PC-3 (cell line): ENCODE measurements at regions of chr2 and their contacts with region 1.

Region 1: GRCh38 chr2:224268441-224268840 is 133.5 kb downstream of the FAM124B start:
- DNase-seq: peak; percentile 97
- ATAC-seq: peak; percentile 93
- H3K4me3 ChIP-seq: no peak overlapping the region
- H3K27ac ChIP-seq: peak overlapping the region; percentile 72
- H3K4me1 ChIP-seq: peaks cover 39% of the 10 kb centered on the region
- H3K27me3 ChIP-seq: no peaks in the 10 kb centered on the region
- CTCF ChIP-seq: no peak

Region 2: GRCh38 chr2:224086226-224086914 is 182.1 kb before region 1 on chr2:
- CTCF ChIA-PET with region 1: no interaction called
- POLR2A ChIA-PET with region 1: no interaction called
- intact Hi-C with region 1: loop called (anchors 2 kb)
- DNase-seq: peak; percentile 96
- ATAC-seq: peak; percentile 88
- H3K4me3 ChIP-seq: peak overlapping the region; percentile 55
- H3K27ac ChIP-seq: peak overlapping the region; percentile 97
- H3K4me1 ChIP-seq: peaks cover 35% of the 10 kb centered on the region
- H3K27me3 ChIP-seq: no peaks in the 10 kb centered on the region
- CTCF ChIP-seq: no peak